Common myeloid progenitor, CD34-positive (primary cell): ENCODE measurements at regions of chr3 and their contacts with region 1.

Region 1: GRCh38 chr3:184371570-184372018 is 6.4 kb downstream of the THPO start:
- DNase-seq: peak; percentile 82 to 93 (median 89)
- H3K4me3 ChIP-seq: no peak overlapping the region
- H3K27ac ChIP-seq: no peak overlapping the region
- H3K4me1 ChIP-seq: peaks cover 0 to 8% (median 2%) of the 10 kb centered on the region in 4 experiments
- H3K27me3 ChIP-seq: peaks cover 0 to 5% (median 0%) of the 10 kb centered on the region in 5 experiments

Region 2: GRCh38 chr3:184354121-184354728 is 17.4 kb before region 1 on chr3:
- CTCF ChIA-PET with region 1: interaction called, 12 read pairs
- POLR2A ChIA-PET with region 1: no interaction called
- DNase-seq: peak in 2 of 3 donors; percentile 56 to 64
- H3K4me3 ChIP-seq: no peak overlapping the region
- H3K27ac ChIP-seq: no peak overlapping the region
- H3K4me1 ChIP-seq: no peaks in the 10 kb centered on the region
- H3K27me3 ChIP-seq: no peaks in the 10 kb centered on the region

Region 3: DNA sequence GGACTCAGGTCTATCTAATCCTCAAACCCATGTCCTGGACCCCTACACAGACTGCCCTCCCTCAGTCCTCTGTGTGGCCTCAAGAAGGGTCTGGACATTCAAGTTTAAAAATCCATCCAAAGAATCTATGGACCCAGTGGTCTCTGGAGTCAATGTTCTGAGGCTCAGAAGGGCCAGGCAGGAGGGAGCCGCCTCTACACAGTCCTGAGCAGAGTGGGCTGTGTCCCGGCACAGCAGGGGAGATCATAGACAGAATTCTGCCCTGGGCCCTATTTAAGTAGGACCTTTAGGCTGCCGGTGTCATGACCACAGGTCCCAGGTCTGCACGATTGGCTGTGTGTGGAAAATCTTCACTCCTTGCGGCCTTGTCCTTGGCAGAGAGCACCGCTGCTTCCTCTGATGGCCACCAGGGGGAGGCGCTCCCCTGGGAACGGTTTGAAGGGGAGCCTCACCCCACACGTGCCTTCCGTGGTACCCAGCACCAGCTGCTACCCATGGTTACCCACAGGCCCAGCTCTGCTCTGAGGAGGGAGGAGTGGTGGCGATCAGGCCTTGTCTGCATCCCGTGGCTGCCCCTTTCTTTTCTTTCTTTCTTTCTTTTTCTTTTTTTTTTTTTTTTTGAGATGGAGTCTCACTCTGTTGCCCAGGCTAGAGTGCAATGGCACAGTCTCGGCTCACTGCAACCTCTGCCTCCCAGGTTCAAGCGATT is 46.2 kb after region 1 on chr3:
- CTCF ChIA-PET with region 1: interaction called, 31 read pairs
- POLR2A ChIA-PET with region 1: no interaction called
- DNase-seq: peak; percentile 85 to 90 (median 88)
- H3K4me3 ChIP-seq: no peak overlapping the region
- H3K27ac ChIP-seq: no peak overlapping the region
- H3K4me1 ChIP-seq: no peaks in the 10 kb centered on the region
- H3K27me3 ChIP-seq: no peaks in the 10 kb centered on the region

Region 4: GRCh38 chr3:184469423-184469822 is 97.8 kb after region 1 on chr3:
- CTCF ChIA-PET with region 1: interaction called, 12 read pairs
- POLR2A ChIA-PET with region 1: interaction called, 3 read pairs
- DNase-seq: no peak
- H3K4me3 ChIP-seq: no peak overlapping the region
- H3K27ac ChIP-seq: no peak overlapping the region
- H3K4me1 ChIP-seq: peaks cover 6 to 67% (median 50%) of the 10 kb centered on the region in 4 experiments
- H3K27me3 ChIP-seq: no peaks in the 10 kb centered on the region

Region 5: DNA sequence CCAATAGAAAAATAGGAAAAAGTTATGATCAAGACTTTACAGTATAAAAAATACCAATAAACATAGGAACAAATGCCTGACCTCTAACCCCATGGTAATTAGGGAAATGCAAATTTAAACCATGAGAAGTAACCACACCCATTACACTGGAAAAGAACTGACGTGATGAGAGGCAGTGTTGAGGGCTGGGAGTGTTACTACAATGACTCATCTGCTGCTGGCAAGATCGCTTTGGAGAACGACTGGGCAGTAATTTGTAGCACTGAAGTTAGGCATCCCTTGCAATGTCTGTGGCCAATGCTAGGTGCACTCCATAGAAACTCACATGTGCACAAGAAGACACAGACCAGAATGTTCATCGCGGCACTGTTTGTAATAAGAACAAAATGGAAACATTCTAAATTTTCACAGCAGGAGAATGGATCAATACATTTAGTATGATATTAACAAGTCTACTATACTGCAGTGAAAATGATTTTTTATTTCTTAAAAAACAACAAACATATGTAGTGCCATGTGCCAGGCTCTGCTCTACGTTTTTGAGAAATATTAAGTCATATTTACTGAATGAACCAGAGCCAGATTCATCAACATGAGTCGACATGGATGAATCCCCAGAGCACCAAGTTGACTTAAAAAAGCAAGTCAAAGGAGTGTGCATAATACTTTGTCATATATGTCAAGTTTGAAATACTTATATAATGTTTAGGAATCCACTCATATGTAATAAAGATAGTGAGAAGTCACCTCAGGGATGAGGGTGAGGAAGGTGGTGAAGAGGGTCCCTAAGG is 152.4 kb after region 1 on chr3:
- CTCF ChIA-PET with region 1: interaction called, 66 read pairs
- POLR2A ChIA-PET with region 1: no interaction called
- DNase-seq: peak; percentile 64 to 83 (median 68)
- H3K4me3 ChIP-seq: no peak overlapping the region
- H3K27ac ChIP-seq: no peak overlapping the region
- H3K4me1 ChIP-seq: peaks cover 7 to 30% (median 17%) of the 10 kb centered on the region in 4 experiments
- H3K27me3 ChIP-seq: no peaks in the 10 kb centered on the region

Region 6: GRCh38 chr3:184549793-184550577 is 178.4 kb after region 1 on chr3:
- CTCF ChIA-PET with region 1: interaction called, 368 read pairs
- POLR2A ChIA-PET with region 1: no interaction called
- DNase-seq: no peak
- H3K4me3 ChIP-seq: no peak overlapping the region
- H3K27ac ChIP-seq: no peak overlapping the region
- H3K4me1 ChIP-seq: peaks cover 0 to 7% (median 0%) of the 10 kb centered on the region in 4 experiments
- H3K27me3 ChIP-seq: peaks cover 0 to 2% (median 0%) of the 10 kb centered on the region in 5 experiments